ENCODE measurements at regions of chr13 and their contacts with region 1.

Region 1: GRCh38 chr13:24931450-24932251 is 164.3 kb upstream of the PABPC3 start:
- DNase-seq: no peak
- H3K4me3 Mint-ChIP-seq: no peak overlapping the region
- H3K27ac Mint-ChIP-seq: no peak overlapping the region
- H3K4me1 Mint-ChIP-seq: peaks cover 2% of the 10 kb centered on the region
- H3K27me3 Mint-ChIP-seq: peaks cover 35% of the 10 kb centered on the region

Region 2: DNA sequence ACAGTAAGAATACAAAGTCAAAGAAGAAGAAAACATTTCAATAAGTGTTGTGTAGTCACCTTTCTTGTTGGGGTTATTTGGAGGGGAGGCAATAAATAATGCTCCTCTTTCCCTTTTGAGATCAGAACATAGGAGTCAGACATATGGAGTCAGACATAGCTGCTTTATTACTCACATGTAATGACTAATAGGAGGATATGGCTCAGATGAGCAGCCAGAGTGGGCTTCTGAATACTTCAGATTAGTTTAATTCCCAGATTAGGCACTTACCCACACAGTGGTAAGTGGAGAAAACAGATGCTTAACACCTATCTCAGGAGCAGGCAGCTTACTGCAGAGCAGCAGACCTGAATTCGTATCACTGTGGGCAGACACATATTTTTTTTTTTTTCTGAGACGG is 1002.7 kb before region 1 on chr13:
- CTCF ChIA-PET with region 1: no interaction called
- intact Hi-C with region 1: no loop called
- DNase-seq: no peak
- H3K4me3 Mint-ChIP-seq: no peak overlapping the region
- H3K27ac Mint-ChIP-seq: no peak overlapping the region
- H3K4me1 Mint-ChIP-seq: no peaks in the 10 kb centered on the region
- H3K27me3 Mint-ChIP-seq: peaks cover 18% of the 10 kb centered on the region

Region 3: GRCh38 chr13:24900507-24900906 is 31.1 kb before region 1 on chr13:
- CTCF ChIA-PET with region 1: no interaction called
- intact Hi-C with region 1: loop called (anchors 1 kb)
- DNase-seq: no peak
- H3K4me3 Mint-ChIP-seq: no peak overlapping the region
- H3K27ac Mint-ChIP-seq: no peak overlapping the region
- H3K4me1 Mint-ChIP-seq: no peaks in the 10 kb centered on the region
- H3K27me3 Mint-ChIP-seq: no peaks in the 10 kb centered on the region